ENCODE measurements at regions of chr1 and their contacts with region 1.

Region 1: DNA sequence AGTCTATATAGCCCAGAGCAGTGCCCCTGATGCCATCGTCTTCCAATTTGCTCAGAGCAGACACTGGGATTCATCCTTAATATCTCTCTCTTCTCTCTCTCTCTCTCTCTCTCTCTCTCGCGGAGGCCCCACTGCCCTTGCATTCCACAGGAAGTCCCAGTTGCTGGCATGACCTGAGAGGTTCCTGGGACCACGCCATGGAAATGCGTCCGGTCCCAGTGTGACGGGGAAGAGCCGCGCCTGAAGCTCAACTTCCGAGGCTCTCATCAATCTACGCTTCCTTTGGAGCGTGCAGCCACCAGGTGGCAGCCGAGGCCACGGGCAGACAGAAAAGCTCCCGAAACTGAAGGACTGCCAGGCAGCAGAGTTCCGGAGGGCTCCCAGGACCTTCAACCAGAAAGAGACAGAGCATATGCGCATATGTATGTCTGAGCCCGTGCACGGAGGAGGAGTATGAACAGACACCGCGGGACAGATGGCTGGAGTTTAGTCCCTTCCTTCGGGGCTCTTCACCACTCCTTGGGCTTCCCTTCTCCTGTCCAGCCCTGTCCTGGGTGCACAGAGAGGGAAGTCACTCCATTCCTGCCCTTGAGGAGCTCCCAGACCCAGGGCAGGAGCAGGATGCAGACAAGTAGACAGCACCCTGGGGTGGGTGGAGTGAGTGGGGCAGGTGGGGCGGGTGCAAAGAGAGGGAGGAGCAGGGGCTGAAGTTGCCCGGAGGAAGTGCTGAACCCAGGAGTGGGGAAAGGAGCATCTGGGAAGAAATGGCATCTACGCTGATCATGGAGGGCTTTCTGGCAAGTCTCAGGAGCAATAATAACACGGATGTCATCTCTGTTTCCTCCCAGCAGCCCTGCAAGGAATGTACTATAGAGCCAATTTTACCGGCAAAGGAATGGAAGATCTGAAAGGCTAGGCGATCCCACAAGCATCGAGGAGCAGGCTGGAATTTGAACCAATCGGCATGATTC is 10.5 kb downstream of the PDZK1IP1 start:
- DNase-seq: peak; percentile 60
- ATAC-seq: peak; percentile 92
- H3K4me3 ChIP-seq: peak overlapping the region; percentile 60; the same call in 1 of the 2 replicates
- H3K27ac ChIP-seq: no peak overlapping the region
- H3K4me1 ChIP-seq: peaks cover 3% of the 10 kb centered on the region; the same call in 1 of the 2 replicates
- H3K27me3 ChIP-seq: no peaks in the 10 kb centered on the region
- CTCF ChIP-seq: peak; percentile 93 to 97 (median 95); a peak in 5 of 6 replicates
- EP300 ChIP-seq: no peak
- POLR2A ChIP-seq: peak; percentile 61
- RAD21 ChIP-seq: peak; percentile 68

Region 2: GRCh38 chr1:46309401-46310159 is 869.7 kb before region 1 on chr1:
- CTCF ChIA-PET with region 1: no interaction called
- POLR2A ChIA-PET with region 1: no interaction called
- RAD21 ChIA-PET with region 1: no interaction called
- SMC1A ChIA-PET with region 1: no interaction called
- in situ Hi-C with region 1: no loop called
- intact Hi-C with region 1: no loop called
- DNase-seq: no peak
- ATAC-seq: no peak
- H3K4me3 ChIP-seq: peak overlapping the region; percentile 66; the same call in 1 of the 2 replicates
- H3K27ac ChIP-seq: no peak overlapping the region
- H3K4me1 ChIP-seq: peaks cover 11% of the 10 kb centered on the region
- H3K27me3 ChIP-seq: no peaks in the 10 kb centered on the region
- CTCF ChIP-seq: no peak
- EP300 ChIP-seq: no peak
- POLR2A ChIP-seq: no peak
- RAD21 ChIP-seq: no peak

Region 3: GRCh38 chr1:46862348-46862747 is 317.0 kb before region 1 on chr1:
- CTCF ChIA-PET with region 1: no interaction called
- POLR2A ChIA-PET with region 1: no interaction called
- RAD21 ChIA-PET with region 1: no interaction called
- SMC1A ChIA-PET with region 1: no interaction called
- in situ Hi-C with region 1: no loop called
- intact Hi-C with region 1: loop called (anchors 10 kb)
- DNase-seq: no peak
- ATAC-seq: no peak
- H3K4me3 ChIP-seq: no peak overlapping the region
- H3K27ac ChIP-seq: no peak overlapping the region
- H3K4me1 ChIP-seq: no peaks in the 10 kb centered on the region
- H3K27me3 ChIP-seq: no peaks in the 10 kb centered on the region
- CTCF ChIP-seq: no peak
- EP300 ChIP-seq: no peak
- POLR2A ChIP-seq: no peak
- RAD21 ChIP-seq: no peak

Region 4: DNA sequence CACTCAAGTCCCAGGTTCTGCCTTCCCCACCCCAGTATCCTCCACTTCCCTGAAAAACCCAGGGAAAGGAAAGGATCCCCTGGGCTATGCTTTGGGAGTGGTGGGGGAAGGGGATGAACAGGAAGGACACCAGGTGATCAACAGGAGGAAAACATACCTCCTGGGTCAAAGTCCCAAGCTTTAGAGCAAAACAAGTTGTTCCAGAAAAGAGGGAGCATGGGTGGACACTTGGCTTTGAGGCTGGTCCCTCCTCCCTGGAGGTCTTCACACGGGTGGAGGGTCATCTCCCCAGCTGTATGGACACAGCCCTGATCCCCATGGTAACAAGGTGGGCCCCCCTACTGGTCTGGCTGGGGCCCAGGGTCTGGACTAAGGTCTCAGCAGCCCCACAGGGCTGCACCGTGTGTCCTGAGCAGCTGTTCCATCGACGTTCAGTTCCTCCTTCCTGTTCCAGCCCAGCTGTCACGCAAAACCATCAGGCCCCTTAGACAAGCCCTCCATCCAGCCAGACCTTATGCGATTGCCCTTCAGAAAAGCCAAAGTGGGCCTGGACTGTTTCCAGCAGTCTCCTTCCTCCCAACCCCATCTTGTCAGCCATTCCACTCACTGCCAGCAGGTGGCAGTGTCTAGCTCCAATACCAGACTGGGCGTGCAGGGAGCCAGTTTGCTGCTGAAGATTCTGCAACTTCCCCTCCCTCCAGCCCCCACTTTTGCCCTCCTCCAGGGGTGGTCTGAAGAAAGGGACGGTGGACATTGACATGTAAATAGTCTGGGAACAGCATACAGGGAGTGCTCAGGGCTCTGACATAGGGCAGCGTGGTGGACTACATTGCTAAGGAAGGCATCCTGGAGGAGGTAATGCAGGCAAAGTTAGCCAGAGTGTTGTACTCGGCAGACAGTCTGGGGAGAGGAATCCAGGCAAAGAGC is 13.4 kb after region 1 on chr1:
- CTCF ChIA-PET with region 1: interaction called, 71 read pairs
- POLR2A ChIA-PET with region 1: no interaction called
- RAD21 ChIA-PET with region 1: interaction called, 8 read pairs
- SMC1A ChIA-PET with region 1: interaction called, 10 read pairs
- in situ Hi-C with region 1: no loop called
- intact Hi-C with region 1: no loop called
- DNase-seq: no peak
- ATAC-seq: peak; percentile 94
- H3K4me3 ChIP-seq: no peak overlapping the region
- H3K27ac ChIP-seq: no peak overlapping the region
- H3K4me1 ChIP-seq: no peaks in the 10 kb centered on the region
- H3K27me3 ChIP-seq: peaks cover 0 to 5% of the 10 kb centered on the region in 2 experiments; a peak in 1 of 4 replicates
- CTCF ChIP-seq: peak; percentile 86 to 96 (median 95)
- EP300 ChIP-seq: no peak
- POLR2A ChIP-seq: no peak
- RAD21 ChIP-seq: peak; percentile 80

Region 5: DNA sequence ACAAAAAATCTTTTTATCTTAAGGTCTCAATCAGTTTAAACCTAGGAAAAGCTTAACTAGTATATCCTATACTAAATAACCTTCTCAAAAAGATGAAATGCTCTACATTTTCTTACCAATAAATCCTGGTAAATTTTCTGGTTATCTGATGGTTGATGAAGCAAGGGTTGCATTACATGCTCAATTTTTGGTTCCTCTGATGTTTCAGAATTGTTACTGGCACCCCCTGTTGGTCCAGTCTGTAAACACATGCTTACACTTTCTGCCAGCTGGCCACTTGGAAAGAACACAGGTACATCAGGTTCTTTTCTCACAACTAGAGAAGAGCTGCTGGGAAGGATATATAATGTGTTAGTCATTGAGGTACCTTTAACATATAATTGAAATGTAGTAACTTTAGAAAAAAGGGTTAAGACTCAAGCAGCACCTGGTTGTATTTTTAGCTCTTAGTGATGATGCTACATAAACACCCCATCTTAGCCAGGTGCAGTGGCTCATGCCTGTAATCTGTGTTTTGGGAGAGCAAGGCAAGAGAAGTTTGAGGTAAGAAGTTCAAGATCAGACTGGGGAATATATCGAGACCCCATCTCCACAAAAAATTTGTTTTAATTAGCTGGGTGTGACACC is 83.6 kb after region 1 on chr1:
- CTCF ChIA-PET with region 1: interaction called, 70 read pairs
- POLR2A ChIA-PET with region 1: no interaction called
- RAD21 ChIA-PET with region 1: interaction called, 19 read pairs
- SMC1A ChIA-PET with region 1: interaction called, 20 read pairs
- in situ Hi-C with region 1: no loop called
- intact Hi-C with region 1: loop called (anchors 1 kb)
- DNase-seq: no peak
- ATAC-seq: peak; percentile 81
- H3K4me3 ChIP-seq: no peak overlapping the region
- H3K27ac ChIP-seq: no peak overlapping the region
- H3K4me1 ChIP-seq: no peaks in the 10 kb centered on the region
- H3K27me3 ChIP-seq: no peaks in the 10 kb centered on the region
- CTCF ChIP-seq: peak; percentile 50 to 70 (median 59)
- EP300 ChIP-seq: no peak
- POLR2A ChIP-seq: no peak
- RAD21 ChIP-seq: peak; percentile 48

Region 6: GRCh38 chr1:47696740-47697441 is 517.6 kb after region 1 on chr1:
- CTCF ChIA-PET with region 1: no interaction called
- POLR2A ChIA-PET with region 1: no interaction called
- RAD21 ChIA-PET with region 1: no interaction called
- SMC1A ChIA-PET with region 1: no interaction called
- in situ Hi-C with region 1: no loop called
- intact Hi-C with region 1: no loop called
- DNase-seq: no peak
- ATAC-seq: no peak
- H3K4me3 ChIP-seq: no peak overlapping the region
- H3K27ac ChIP-seq: no peak overlapping the region
- H3K4me1 ChIP-seq: no peaks in the 10 kb centered on the region
- H3K27me3 ChIP-seq: peaks cover 0 to 2% of the 10 kb centered on the region in 2 experiments; a peak in 2 of 4 replicates
- CTCF ChIP-seq: no peak
- EP300 ChIP-seq: no peak
- POLR2A ChIP-seq: no peak
- RAD21 ChIP-seq: no peak

Region 7: GRCh38 chr1:47710329-47711071 is 531.2 kb after region 1 on chr1:
- CTCF ChIA-PET with region 1: interaction called, 5 read pairs
- POLR2A ChIA-PET with region 1: no interaction called
- RAD21 ChIA-PET with region 1: interaction called, 3 read pairs
- SMC1A ChIA-PET with region 1: no interaction called
- in situ Hi-C with region 1: no loop called
- intact Hi-C with region 1: loop called (anchors 1 kb)
- DNase-seq: no peak
- ATAC-seq: peak; percentile 95
- H3K4me3 ChIP-seq: no peak overlapping the region
- H3K27ac ChIP-seq: no peak overlapping the region
- H3K4me1 ChIP-seq: no peaks in the 10 kb centered on the region
- H3K27me3 ChIP-seq: peaks cover 13 to 18% of the 10 kb centered on the region in 2 experiments
- CTCF ChIP-seq: peak; percentile 93 to 96 (median 93)
- EP300 ChIP-seq: no peak
- POLR2A ChIP-seq: no peak
- RAD21 ChIP-seq: peak; percentile 87

Measured in GM12878 (cell line).